ENCODE measurements at regions of chr13 and their contacts with region 1.

Region 1: GRCh38 chr13:19759671-19760070 is 23.1 kb downstream of the PSPC1 start:
- DNase-seq: no peak
- H3K4me3 ChIP-seq: no peak overlapping the region
- H3K27ac ChIP-seq: no peak overlapping the region
- H3K4me1 ChIP-seq: no peaks in the 10 kb centered on the region
- H3K27me3 ChIP-seq: no peaks in the 10 kb centered on the region
- CTCF ChIP-seq: no peak
- EP300 ChIP-seq: no peak
- POLR2A ChIP-seq: no peak
- RAD21 ChIP-seq: no peak

Region 2: DNA sequence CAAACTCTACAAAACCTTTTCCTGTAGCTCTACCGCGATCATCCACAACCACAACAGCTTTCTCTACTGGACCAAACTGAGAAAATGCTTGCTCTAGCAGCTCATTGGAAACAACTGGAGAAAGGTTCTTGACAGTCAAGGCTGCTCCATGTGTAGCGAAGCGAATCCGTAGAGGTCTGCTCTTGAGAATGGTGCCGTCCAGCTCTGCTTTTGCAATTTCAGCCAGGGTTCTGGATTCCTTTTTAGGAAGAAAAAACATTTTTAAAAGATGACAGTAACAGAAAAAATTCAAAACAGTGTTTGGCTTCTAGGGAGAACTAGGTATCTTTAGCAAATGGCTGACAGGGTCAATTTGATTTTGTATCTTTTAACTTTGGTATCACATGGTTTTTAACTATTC is 12.6 kb after region 1 on chr13:
- CTCF ChIA-PET with region 1: interaction called, 4 read pairs
- POLR2A ChIA-PET with region 1: interaction called, 11 read pairs
- DNase-seq: no peak
- H3K4me3 ChIP-seq: no peak overlapping the region
- H3K27ac ChIP-seq: no peak overlapping the region
- H3K4me1 ChIP-seq: no peaks in the 10 kb centered on the region; a peak in 1 of 7 replicates
- H3K27me3 ChIP-seq: no peaks in the 10 kb centered on the region
- CTCF ChIP-seq: no peak
- EP300 ChIP-seq: no peak
- POLR2A ChIP-seq: no peak
- RAD21 ChIP-seq: no peak

Region 3: GRCh38 chr13:19805765-19806164 is 46.1 kb after region 1 on chr13:
- CTCF ChIA-PET with region 1: no interaction called
- POLR2A ChIA-PET with region 1: no interaction called
- DNase-seq: no peak
- H3K4me3 ChIP-seq: no peak overlapping the region
- H3K27ac ChIP-seq: no peak overlapping the region
- H3K4me1 ChIP-seq: no peaks in the 10 kb centered on the region
- H3K27me3 ChIP-seq: no peaks in the 10 kb centered on the region
- CTCF ChIP-seq: no peak
- EP300 ChIP-seq: no peak
- POLR2A ChIP-seq: no peak
- RAD21 ChIP-seq: no peak

Measured in H1 (cell line).